PC-3 (cell line): ENCODE measurements at regions of chr10 and their contacts with region 1.

Region 1: DNA sequence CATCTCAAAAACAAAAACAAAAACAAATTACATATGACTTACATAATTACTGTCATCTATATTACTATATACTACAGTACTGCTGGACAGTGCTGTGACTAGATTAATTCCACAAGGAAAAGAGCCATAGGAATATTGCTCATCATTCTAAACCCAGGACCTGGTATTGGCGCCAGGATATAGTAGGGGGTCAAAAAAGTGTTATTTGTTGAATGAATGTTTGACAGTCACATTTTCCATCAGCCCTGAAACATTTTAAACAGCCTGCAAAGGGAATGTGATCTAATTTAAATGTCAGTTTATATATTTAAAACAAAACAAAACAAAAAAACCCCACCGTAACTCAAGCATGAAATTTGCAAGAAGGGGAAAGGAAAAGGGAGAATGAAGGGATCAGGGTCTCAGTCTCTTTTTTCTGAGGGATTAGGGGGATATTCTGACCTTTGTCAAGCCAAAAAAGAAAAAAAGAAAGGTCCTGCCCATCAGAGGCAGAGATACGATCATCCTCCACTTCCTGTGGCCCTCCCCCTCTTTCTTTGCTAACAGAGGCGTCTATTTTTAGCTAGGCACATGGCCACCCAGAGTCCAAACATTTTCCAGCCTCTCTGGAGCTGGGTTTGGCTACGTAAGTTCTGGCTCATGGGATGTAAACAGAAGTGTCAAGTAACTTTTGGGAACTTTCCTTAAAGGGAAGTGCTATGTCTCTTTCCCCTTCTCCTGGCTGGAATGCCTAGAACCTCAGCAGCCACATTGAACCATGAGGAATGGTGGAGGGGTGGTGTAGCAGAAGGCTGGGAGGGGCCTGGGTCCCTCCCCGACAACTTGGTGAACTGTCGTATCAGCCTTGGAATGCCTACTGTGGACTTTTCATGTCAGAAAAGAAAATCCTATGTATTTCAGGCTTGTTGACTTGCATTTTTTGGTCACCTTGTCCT is 44.6 kb upstream of the DLG5 start:
- DNase-seq: peak; percentile 99
- ATAC-seq: peak; percentile 89
- H3K4me3 ChIP-seq: no peak overlapping the region
- H3K27ac ChIP-seq: peak overlapping the region; percentile 53
- H3K4me1 ChIP-seq: peaks cover 14% of the 10 kb centered on the region
- H3K27me3 ChIP-seq: no peaks in the 10 kb centered on the region
- CTCF ChIP-seq: no peak

Region 2: DNA sequence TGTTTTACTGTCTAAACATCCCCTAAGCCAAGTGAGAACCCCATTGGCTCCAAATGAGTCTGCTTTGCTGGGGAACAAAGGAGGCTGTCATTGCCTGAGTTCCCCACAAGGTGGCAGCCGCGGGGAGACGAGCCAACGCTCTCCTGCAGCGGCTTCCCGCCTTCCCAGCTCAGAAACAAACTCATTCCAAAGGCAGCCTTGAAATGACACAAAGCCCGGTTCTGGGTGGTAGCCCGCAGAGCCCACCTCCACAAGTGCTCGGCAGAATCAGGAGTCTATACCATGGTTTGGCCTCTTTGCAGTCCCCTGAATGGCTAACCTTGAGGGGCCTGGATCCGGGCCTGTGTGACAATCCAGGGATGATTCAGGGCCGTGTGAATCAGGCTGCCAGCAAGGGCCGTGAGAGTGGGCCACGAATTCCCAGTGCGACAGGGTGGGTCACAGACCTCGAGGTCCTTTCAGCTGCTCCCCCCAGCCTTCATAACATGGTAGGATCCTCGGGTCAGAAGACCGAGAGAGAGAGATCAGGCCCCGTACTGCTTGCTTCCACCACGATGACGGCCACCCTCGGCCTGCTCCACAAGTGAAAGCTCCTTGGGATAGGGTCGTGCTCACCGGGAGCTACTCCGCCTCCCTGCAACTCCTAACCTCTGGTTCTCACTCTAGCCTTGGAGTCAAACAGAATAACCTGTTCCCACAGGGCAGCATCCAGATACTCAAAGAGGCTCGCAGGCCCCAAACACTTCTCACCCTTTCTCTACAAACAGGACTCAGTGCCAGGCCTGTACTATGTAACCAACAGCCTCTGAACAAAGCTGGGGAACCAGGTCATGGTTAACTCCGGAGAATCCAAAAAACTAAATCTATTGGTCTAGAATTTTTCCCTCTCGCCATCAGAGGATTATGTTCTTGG is 124.2 kb before region 1 on chr10:
- CTCF ChIA-PET with region 1: interaction called, 16 read pairs
- POLR2A ChIA-PET with region 1: no interaction called
- intact Hi-C with region 1: loop called (anchors 1 kb)
- DNase-seq: peak; percentile 98
- ATAC-seq: peak; percentile 68
- H3K4me3 ChIP-seq: no peak overlapping the region
- H3K27ac ChIP-seq: peak overlapping the region; percentile 1
- H3K4me1 ChIP-seq: peaks cover 30% of the 10 kb centered on the region
- H3K27me3 ChIP-seq: no peaks in the 10 kb centered on the region
- CTCF ChIP-seq: peak; percentile 100

Region 3: GRCh38 chr10:77909749-77910375 is 61.3 kb before region 1 on chr10:
- CTCF ChIA-PET with region 1: interaction called, 7 read pairs
- POLR2A ChIA-PET with region 1: no interaction called
- intact Hi-C with region 1: loop called (anchors 2 kb)
- DNase-seq: peak; percentile 78
- ATAC-seq: 0 out of 2 replicates have a peak, but pooled peaks have one; percentile 6
- H3K4me3 ChIP-seq: no peak overlapping the region
- H3K27ac ChIP-seq: peak overlapping the region; percentile 8
- H3K4me1 ChIP-seq: peaks cover 25% of the 10 kb centered on the region
- H3K27me3 ChIP-seq: no peaks in the 10 kb centered on the region
- CTCF ChIP-seq: no peak

Region 4: DNA sequence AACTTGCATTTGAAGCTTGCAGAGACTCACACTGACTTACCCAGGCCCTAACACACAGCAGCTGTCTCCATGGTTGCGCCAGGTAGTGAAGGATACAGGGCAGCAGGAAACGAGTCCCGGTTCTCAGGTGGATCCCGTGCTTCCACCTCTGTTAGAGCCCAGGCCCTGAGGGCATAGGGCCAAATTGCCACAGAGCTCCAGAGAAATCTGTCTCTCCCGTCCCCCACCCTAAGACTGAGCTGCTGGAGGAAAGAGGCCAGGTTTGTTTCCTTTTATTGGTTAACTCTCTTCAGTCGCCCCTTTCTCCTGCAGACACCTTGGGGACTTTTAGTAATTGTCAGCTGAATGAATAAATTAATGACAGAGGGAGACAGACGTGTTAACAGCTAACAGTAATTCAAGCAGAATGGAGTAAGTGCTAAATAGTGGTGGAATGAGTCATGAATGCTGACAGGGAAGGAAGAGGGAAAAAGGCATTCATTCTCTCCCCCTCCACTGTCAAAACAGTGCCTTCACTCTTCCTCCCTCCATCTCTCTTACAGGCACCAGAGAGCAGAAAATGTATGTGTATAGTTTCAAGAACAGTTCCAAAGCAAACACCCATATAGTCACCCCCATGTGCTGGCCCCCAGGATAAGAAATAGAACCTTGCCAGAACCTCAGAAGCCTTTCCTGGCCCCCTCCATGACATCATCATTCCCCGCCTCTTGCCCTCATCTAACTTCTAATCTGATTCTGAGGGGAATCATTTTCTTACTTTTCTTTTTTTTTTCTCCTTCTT is 27.8 kb before region 1 on chr10:
- CTCF ChIA-PET with region 1: interaction called, 6 read pairs
- POLR2A ChIA-PET with region 1: no interaction called
- intact Hi-C with region 1: loop called (anchors 1 kb)
- DNase-seq: peak; percentile 99
- ATAC-seq: peak; percentile 69
- H3K4me3 ChIP-seq: peak overlapping the region; percentile 4; the same call in 1 of the 2 replicates
- H3K27ac ChIP-seq: peak overlapping the region; percentile 72
- H3K4me1 ChIP-seq: peaks cover 32% of the 10 kb centered on the region
- H3K27me3 ChIP-seq: no peaks in the 10 kb centered on the region
- CTCF ChIP-seq: no peak

Region 5: DNA sequence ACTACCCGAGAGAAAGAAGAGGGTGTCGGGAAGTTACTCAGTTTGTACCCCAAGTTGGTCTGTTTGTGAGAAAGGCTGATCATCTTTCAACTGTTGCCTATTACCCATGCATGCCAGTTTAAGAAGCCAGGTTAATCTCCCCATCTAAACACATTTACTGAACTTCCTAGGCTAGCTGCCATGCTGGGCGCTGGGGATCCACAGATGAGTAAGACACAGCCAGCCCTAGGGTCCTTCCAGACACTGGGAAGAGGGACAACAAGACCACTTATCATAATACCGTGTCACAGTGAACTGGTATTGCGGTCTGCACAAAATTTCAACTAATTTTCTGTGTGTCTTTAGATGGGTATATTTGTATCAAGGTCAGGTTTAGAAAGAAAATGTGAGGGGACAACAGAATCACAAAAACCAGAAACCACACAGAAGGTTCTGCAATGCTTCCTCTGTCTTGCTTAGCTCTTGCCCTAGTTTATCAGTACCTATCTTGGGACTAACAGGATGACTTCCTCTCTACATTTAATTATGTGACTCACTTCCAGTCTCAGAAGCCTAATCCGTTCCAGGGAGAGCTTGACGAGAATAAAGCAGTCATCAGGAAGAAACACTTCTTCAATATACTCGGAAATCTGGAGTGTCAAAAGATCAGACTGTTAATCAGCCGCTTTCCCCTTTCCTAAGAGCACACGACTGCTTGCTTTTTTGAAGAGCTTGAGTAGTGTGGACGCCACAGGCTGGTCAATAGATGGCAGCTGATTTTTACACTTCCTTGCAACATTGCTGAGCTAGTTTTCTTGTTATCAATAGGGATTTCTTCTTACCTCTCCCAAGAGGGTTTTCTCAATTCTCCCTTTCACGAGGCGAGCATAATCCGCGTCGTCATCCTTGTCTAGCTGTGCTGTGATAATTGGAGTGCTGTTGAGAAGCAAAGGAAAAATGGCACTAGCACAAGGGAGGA is 12.5 kb after region 1 on chr10:
- CTCF ChIA-PET with region 1: interaction called, 7 read pairs
- POLR2A ChIA-PET with region 1: interaction called, 4 read pairs
- intact Hi-C with region 1: loop called (anchors 1 kb)
- DNase-seq: peak; percentile 98
- ATAC-seq: peak; percentile 98
- H3K4me3 ChIP-seq: no peak overlapping the region
- H3K27ac ChIP-seq: peak overlapping the region; percentile 42
- H3K4me1 ChIP-seq: peaks cover 23% of the 10 kb centered on the region
- H3K27me3 ChIP-seq: no peaks in the 10 kb centered on the region
- CTCF ChIP-seq: peak; percentile 24; the same call in 1 of the 2 replicates

Region 6: GRCh38 chr10:78029269-78030226 is 58.4 kb after region 1 on chr10 and contains the start of gene POLR3A:
- CTCF ChIA-PET with region 1: no interaction called
- POLR2A ChIA-PET with region 1: no interaction called
- intact Hi-C with region 1: loop called (anchors 1 kb)
- DNase-seq: peak; percentile 100
- ATAC-seq: peak; percentile 48
- H3K4me3 ChIP-seq: peak within 1 kb of the TSS; percentile 69
- H3K27ac ChIP-seq: peak within 1 kb of the TSS; percentile 23
- H3K4me1 ChIP-seq: peaks cover 47% of the 10 kb centered on the region
- H3K27me3 ChIP-seq: no peaks in the 10 kb centered on the region
- CTCF ChIP-seq: peak; percentile 100
- total RNA-seq, gene POLR3A: 97.0 and 97.2 TPM in 2 replicates